Caco-2 (cell line): ENCODE measurements at regions of chr17 and their contacts with region 1.

Region 1: GRCh38 chr17:37650419-37651003 is 7.3 kb upstream of the DDX52 start:
- DNase-seq: peak; percentile 64 to 66
- H3K4me3 ChIP-seq: no peak overlapping the region
- H3K4me3 Mint-ChIP-seq: no peak overlapping the region
- H3K27ac Mint-ChIP-seq: no peak overlapping the region
- H3K4me1 ChIP-seq: peaks cover 13% of the 10 kb centered on the region
- H3K4me1 Mint-ChIP-seq: peaks cover 14% of the 10 kb centered on the region
- H3K27me3 ChIP-seq: no peaks in the 10 kb centered on the region
- H3K27me3 Mint-ChIP-seq: no peaks in the 10 kb centered on the region
- CTCF ChIP-seq: peak; percentile 70 to 71

Region 2: GRCh38 chr17:37614823-37615222 is 35.7 kb before region 1 on chr17:
- CTCF ChIA-PET with region 1: no interaction called
- POLR2A ChIA-PET with region 1: no interaction called
- intact Hi-C with region 1: no loop called
- DNase-seq: no peak
- H3K4me3 ChIP-seq: no peak overlapping the region
- H3K4me3 Mint-ChIP-seq: no peak overlapping the region
- H3K27ac Mint-ChIP-seq: no peak overlapping the region
- H3K4me1 ChIP-seq: 0 out of 2 replicates have a peak, but pooled peaks cover 3% of the 10 kb centered on the region
- H3K4me1 Mint-ChIP-seq: no peaks in the 10 kb centered on the region
- H3K27me3 ChIP-seq: no peaks in the 10 kb centered on the region
- H3K27me3 Mint-ChIP-seq: no peaks in the 10 kb centered on the region
- CTCF ChIP-seq: no peak

Region 3: GRCh38 chr17:37698132-37698615 is 47.7 kb after region 1 on chr17:
- CTCF ChIA-PET with region 1: no interaction called
- POLR2A ChIA-PET with region 1: no interaction called
- intact Hi-C with region 1: no loop called
- DNase-seq: no peak
- H3K4me3 ChIP-seq: no peak overlapping the region
- H3K4me3 Mint-ChIP-seq: no peak overlapping the region
- H3K27ac Mint-ChIP-seq: no peak overlapping the region
- H3K4me1 ChIP-seq: peaks cover 23% of the 10 kb centered on the region
- H3K4me1 Mint-ChIP-seq: peaks cover 39% of the 10 kb centered on the region
- H3K27me3 ChIP-seq: no peaks in the 10 kb centered on the region
- H3K27me3 Mint-ChIP-seq: no peaks in the 10 kb centered on the region
- CTCF ChIP-seq: no peak

Region 4: DNA sequence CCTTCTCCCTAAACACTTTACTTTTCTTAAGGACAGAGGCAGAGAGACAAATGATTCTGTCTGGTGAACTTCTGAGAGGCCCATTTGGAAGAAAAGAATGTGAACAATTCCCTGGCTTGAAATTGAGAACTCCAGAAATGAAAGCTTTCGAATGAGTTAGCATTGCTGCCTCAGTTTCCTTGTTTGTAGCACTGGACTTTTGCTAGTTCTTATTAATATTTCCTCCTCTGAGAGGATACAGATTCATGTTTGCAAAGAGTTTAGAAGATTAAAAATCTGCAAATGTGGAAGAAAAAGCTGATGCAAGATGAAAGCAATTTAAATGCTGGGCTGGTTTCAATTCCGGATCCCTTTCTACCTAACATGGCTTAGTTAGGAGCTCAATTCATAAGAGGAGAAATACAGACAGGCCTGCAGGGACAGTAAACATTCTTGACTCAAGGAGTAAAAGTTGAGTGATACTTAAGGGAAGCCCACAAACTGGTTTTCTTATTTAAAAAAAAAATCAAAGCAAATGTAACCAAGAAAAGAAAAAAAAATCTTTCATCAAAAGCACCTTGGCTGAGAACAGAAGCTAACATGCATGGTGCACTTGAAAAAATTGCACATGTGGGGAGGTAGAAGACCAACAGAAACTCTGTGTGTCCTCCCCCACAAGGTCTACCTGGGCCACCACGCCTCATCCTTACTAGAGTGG is 67.3 kb after region 1 on chr17:
- CTCF ChIA-PET with region 1: no interaction called
- POLR2A ChIA-PET with region 1: interaction called, 10 read pairs
- intact Hi-C with region 1: no loop called
- DNase-seq: no peak
- H3K4me3 ChIP-seq: no peak overlapping the region
- H3K4me3 Mint-ChIP-seq: peak overlapping the region; percentile 3
- H3K27ac Mint-ChIP-seq: peak overlapping the region; percentile 65
- H3K4me1 ChIP-seq: peaks cover 28% of the 10 kb centered on the region
- H3K4me1 Mint-ChIP-seq: peaks cover 31% of the 10 kb centered on the region
- H3K27me3 ChIP-seq: no peaks in the 10 kb centered on the region
- H3K27me3 Mint-ChIP-seq: no peaks in the 10 kb centered on the region
- CTCF ChIP-seq: no peak

Region 5: DNA sequence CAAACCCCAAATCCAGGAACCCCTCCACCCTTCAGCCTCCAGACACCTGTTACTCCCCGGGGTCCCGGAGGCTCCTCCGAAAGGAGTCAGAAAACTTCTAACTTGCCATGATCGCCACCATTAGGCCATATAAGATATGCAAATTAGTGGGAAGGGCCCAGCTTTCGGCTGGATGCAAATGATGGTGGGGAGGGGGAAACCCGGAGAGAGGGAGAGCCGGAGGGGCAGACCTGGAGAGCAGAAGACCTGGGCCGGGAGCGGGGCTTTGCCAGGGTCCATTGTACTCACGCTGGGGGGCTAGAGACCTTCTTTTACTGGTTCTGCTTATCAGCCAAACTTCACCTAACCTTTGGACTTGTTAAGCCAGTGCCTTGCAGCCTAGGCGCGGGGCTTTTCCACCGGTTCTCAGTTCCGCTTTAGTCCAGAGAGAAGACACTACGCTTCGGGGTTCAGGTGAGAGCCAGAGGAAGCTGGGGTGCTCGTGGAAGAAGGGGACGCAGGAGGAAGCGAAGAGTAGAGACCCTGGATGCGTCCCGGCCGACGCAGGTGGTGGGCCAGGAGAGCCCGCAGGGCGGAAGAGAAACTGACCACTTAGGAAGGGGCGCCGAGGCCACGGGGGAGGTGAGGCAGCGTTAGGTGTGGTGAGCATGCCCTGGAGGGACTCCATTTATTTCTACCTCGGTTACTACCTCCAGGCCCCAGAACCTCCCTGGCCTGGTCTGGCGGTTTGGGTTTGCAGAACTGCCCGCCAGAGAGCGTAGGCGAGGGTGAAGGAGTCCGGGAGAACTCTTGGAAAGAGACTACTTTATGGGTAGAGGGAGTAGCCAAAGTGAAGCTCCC is 94.7 kb after region 1 on chr17 and contains the start of gene HNF1B:
- CTCF ChIA-PET with region 1: interaction called, 17 read pairs
- POLR2A ChIA-PET with region 1: interaction called, 11 read pairs
- intact Hi-C with region 1: loop called (anchors 1 kb)
- DNase-seq: peak; percentile 87 to 88
- H3K4me3 ChIP-seq: peak within 1 kb of the TSS; percentile 64
- H3K4me3 Mint-ChIP-seq: peak within 1 kb of the TSS; percentile 100
- H3K27ac Mint-ChIP-seq: peak within 1 kb of the TSS; percentile 100
- H3K4me1 ChIP-seq: peaks cover 21% of the 10 kb centered on the region
- H3K4me1 Mint-ChIP-seq: peaks cover 23% of the 10 kb centered on the region
- H3K27me3 ChIP-seq: no peaks in the 10 kb centered on the region
- H3K27me3 Mint-ChIP-seq: no peaks in the 10 kb centered on the region
- CTCF ChIP-seq: peak in 1 of 2 experiments; percentile 17
- total RNA-seq, gene HNF1B: 36.9 TPM in 2 replicates